Endothelial cell of umbilical vein (primary cell): ENCODE measurements at regions of chr1 and their contacts with region 1.

Region 1: GRCh38 chr1:89692601-89693521 is 59.9 kb downstream of the LRRC8C start:
- DNase-seq: peak; percentile 96
- H3K4me3 ChIP-seq: no peak overlapping the region
- H3K27ac ChIP-seq: peak overlapping the region; percentile 86
- H3K4me1 ChIP-seq: peaks cover 57% of the 10 kb centered on the region
- H3K27me3 ChIP-seq: no peaks in the 10 kb centered on the region
- CTCF ChIP-seq: no peak
- POLR2A ChIP-seq: peak; percentile 76

Region 2: GRCh38 chr1:89670163-89670562 is 22.7 kb before region 1 on chr1:
- CTCF ChIA-PET with region 1: interaction called, 3 read pairs
- POLR2A ChIA-PET with region 1: no interaction called
- dilution Hi-C with region 1: no loop called
- intact Hi-C with region 1: loop called (anchors 1 kb)
- DNase-seq: peak; percentile 27
- H3K4me3 ChIP-seq: no peak overlapping the region
- H3K27ac ChIP-seq: no peak overlapping the region
- H3K4me1 ChIP-seq: peaks cover 51% of the 10 kb centered on the region
- H3K27me3 ChIP-seq: no peaks in the 10 kb centered on the region
- CTCF ChIP-seq: no peak
- POLR2A ChIP-seq: no peak

Region 3: DNA sequence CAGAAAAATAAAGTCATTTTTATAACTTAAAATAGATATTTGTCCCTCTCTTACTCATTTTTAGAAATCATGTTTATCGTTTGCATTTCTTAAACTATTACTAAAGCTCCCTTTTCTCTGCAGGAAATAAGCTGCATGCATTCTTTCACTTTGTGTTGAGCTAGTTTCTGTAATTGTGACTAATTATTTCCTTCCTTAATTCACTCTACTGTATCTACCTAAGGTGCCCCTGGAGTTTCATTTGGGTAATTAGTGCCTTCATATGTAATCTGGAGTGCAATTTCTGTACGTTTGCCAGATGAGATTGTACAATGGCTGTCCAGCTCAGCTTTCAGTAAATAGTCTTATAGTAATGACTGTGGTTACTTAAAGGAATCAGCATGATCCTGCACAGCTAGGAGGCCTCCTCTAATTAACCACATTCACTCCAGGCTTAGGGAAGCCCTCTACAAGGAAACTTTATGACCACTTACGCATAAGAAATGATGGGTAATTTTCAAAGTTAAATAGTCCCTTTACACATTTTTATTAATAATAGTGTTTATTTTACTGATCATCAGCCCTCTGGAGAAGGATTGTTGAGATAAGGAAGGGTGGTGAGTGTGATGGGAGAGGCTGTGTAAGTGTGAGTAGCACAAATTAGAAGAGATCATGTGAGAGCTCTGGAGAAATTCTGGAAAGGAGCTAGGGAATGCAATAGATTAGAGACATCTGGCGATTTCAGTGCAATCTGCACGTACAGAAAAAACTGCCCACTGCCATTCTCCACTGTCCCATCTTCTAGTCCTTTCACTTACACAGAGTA is 26.8 kb after region 1 on chr1:
- CTCF ChIA-PET with region 1: interaction called, 14 read pairs
- POLR2A ChIA-PET with region 1: interaction called, 3 read pairs
- dilution Hi-C with region 1: no loop called
- intact Hi-C with region 1: loop called (anchors 1 kb)
- DNase-seq: peak; percentile 89
- H3K4me3 ChIP-seq: peak overlapping the region in 2 of 3 experiments; percentile 16 to 52
- H3K27ac ChIP-seq: peak overlapping the region; percentile 76
- H3K4me1 ChIP-seq: peaks cover 75% of the 10 kb centered on the region
- H3K27me3 ChIP-seq: no peaks in the 10 kb centered on the region
- CTCF ChIP-seq: no peak
- POLR2A ChIP-seq: no peak

Region 4: GRCh38 chr1:89855413-89856123 is 162.7 kb after region 1 on chr1:
- CTCF ChIA-PET with region 1: no interaction called
- POLR2A ChIA-PET with region 1: no interaction called
- dilution Hi-C with region 1: no loop called
- intact Hi-C with region 1: no loop called
- DNase-seq: peak; percentile 60
- H3K4me3 ChIP-seq: no peak overlapping the region
- H3K27ac ChIP-seq: peak overlapping the region; percentile 41
- H3K4me1 ChIP-seq: peaks cover 17% of the 10 kb centered on the region
- H3K27me3 ChIP-seq: no peaks in the 10 kb centered on the region
- CTCF ChIP-seq: no peak
- POLR2A ChIP-seq: no peak

Region 5: GRCh38 chr1:91582431-91582921 is 1889.6 kb after region 1 on chr1:
- CTCF ChIA-PET with region 1: no interaction called
- POLR2A ChIA-PET with region 1: no interaction called
- dilution Hi-C with region 1: no loop called
- intact Hi-C with region 1: loop called (anchors 5 kb)
- DNase-seq: peak; percentile 28
- H3K4me3 ChIP-seq: no peak overlapping the region
- H3K27ac ChIP-seq: no peak overlapping the region
- H3K4me1 ChIP-seq: peaks cover 3% of the 10 kb centered on the region
- H3K27me3 ChIP-seq: no peaks in the 10 kb centered on the region
- CTCF ChIP-seq: no peak
- POLR2A ChIP-seq: no peak